ENCODE measurements at regions of chr14 and their contacts with region 1.

Region 1: DNA sequence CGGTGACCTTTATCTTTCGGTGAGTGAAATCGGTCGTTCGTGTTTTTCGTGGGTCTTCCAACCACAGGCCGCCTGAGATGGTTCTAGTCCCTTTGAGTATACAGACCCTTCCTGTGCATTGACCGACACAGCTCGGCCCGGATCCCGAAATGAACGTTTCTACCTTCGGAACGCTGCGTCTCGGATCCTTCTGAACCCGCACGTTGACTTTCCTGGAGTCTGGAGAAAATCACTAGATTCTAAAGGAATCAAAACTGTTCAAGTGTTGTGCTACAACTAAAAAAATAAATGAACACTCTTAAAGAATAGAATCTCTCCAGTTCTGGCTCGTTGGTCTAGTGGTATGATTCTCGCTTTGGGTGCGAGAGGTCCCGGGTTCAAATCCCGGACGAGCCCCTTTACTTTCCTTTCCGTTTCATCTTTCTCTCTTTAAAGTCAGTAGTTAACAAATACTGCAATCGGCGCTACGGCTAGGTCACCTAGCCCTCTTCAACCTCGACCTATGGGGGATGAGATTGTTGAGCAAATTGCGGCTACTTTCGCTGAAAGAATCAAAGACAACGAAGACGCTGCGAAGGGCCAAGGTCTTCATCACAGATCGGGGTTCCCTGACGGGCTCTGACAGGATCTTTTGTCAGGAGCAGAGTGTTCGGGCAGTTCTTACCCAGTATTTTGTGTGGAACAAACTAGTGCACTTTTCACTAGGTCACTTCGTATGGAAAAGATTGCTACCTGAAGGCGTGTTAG is 8.6 kb downstream of the OR6S1 start:
- DNase-seq: peak; percentile 63 to 75
- H3K4me3 ChIP-seq: peak overlapping the region; percentile 81; the same call in 1 of the 2 replicates
- H3K27ac ChIP-seq: no peak overlapping the region
- H3K4me1 ChIP-seq: no peaks in the 10 kb centered on the region
- H3K27me3 ChIP-seq: no peaks in the 10 kb centered on the region
- CTCF ChIP-seq: no peak

Region 2: DNA sequence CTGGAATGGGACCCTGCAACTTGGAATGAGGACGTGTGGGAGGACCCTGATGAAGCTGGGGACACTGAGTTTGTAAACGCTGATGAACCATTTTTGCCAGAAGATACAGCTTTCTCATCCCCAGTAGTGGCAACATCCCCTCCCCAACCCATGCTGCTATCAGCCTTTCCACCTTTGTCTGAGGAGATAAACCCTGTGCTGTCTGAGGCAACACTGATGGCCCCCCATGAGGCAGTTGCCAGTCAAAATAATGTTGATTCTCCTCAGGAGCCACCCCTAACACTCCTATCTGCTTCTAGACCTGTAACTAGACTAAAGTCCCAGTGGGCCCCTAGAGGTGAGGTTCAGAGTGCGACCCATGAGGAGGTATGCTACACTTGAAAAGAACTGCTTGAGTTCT is 64.5 kb before region 1 on chr14:
- CTCF ChIA-PET with region 1: no interaction called
- POLR2A ChIA-PET with region 1: no interaction called
- intact Hi-C with region 1: no loop called
- DNase-seq: no peak
- H3K4me3 ChIP-seq: no peak overlapping the region
- H3K27ac ChIP-seq: no peak overlapping the region
- H3K4me1 ChIP-seq: no peaks in the 10 kb centered on the region
- H3K27me3 ChIP-seq: no peaks in the 10 kb centered on the region
- CTCF ChIP-seq: no peak

Region 3: DNA sequence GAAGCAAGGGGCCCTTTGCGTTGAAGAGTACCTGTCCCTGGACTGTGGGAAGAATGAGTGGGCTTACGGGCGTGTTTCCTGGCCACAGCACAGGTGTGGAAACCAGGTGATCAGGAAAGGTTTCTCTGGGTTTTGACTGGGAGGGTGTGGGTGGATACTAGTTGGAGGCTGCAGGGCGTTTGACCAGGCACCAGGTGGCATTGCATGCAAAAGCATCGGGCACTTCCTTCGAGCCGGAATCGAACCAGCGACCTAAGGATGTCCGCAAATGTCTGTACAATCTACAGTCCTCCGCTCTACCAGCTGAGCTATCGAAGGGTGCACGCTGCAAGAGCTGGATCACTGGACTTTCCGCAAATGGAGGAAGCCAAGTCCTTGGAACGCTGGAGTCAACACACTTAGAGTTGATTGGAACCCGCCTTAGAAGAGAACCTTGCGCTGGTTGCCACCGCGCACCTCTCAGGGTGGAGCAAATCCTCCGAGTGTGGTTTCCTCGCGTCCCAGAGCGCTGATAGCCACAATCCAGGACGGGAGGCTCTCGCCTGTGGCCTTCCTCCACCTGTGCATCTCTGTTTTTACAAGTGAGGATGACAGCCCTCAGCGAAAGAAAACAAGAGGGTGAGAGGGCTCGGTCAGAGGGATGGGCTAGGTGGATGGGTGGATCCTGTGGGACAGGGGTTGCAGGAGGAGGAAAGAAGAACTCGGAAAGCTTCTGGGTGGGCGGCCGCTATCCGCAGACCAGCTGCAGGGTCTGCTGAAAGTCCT is 30.3 kb after region 1 on chr14:
- CTCF ChIA-PET with region 1: no interaction called
- POLR2A ChIA-PET with region 1: no interaction called
- intact Hi-C with region 1: loop called (anchors 2 kb)
- DNase-seq: peak; percentile 53 to 55
- H3K4me3 ChIP-seq: peak overlapping the region; percentile 54; the same call in 1 of the 2 replicates
- H3K27ac ChIP-seq: no peak overlapping the region
- H3K4me1 ChIP-seq: no peaks in the 10 kb centered on the region; the same call in 1 of the 2 replicates
- H3K27me3 ChIP-seq: no peaks in the 10 kb centered on the region
- CTCF ChIP-seq: peak; percentile 60

Region 4: DNA sequence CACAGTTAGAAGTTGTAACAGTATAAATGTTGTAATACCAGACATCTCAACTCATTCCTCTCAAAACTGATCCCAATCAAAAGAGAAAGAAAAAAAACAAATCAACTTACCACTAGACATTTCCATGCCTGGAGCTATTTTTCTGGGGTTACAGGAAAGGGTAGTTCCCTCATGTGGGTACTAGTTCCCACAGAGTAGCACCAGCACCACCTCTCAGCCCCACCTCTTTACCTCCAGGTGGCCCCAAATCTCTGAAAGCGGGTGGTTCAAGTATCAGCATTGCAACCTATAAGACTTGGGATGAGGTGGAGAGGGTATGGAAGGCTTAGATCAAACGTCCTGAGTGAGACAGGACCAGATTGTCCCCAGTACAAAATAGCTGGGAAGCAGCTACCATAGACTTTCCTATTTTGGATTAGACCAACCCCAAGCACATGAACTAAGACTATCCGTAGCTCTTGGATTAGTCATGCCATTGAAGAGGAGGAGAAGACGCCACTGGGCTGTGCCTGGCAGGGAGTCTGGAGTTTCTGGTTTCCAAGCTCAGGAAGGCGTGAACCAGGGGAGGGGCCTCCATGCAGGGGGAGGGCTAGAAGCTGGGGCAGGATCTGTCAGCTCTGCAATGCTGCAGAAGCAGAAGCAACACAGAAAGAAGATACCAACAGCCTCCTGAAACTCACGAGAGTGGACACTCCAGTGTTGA is 366.0 kb after region 1 on chr14 and contains the start of gene SLC39A2:
- CTCF ChIA-PET with region 1: no interaction called
- POLR2A ChIA-PET with region 1: no interaction called
- intact Hi-C with region 1: loop called (anchors 5 kb)
- DNase-seq: peak; percentile 64 to 76
- H3K4me3 ChIP-seq: no peak within 1 kb of the TSS
- H3K27ac ChIP-seq: peak within 1 kb of the TSS; percentile 68
- H3K4me1 ChIP-seq: peaks cover 20% of the 10 kb centered on the region
- H3K27me3 ChIP-seq: no peaks in the 10 kb centered on the region
- CTCF ChIP-seq: no peak
- total RNA-seq, gene SLC39A2: 0.35 and 0.68 TPM in 2 replicates